SK-N-SH (cell line): ENCODE measurements at regions of chr11 and their contacts with region 1.

Region 1: DNA sequence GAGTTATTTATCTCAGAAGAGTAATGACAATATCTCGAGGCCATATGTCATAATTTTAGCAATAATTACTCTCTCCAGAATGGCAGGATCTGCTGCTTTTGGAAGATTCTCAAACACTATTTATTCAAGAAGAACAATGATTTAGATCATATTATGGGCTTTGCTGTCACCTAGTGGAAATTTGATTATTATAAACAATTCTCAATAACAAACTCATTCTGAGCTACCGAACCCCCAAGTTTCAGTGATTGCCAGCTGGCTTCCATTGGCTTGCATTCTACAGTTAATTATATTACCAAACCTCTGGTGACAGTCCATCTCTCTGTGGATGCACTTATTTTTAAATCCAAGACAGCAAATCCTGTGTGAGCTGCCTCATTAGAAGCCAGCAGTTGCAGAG is 27.9 kb upstream of the SLC36A4 start:
- DNase-seq: peak; percentile 46
- H3K4me3 ChIP-seq: no peak overlapping the region
- H3K27ac ChIP-seq: no peak overlapping the region
- H3K4me1 ChIP-seq: no peaks in the 10 kb centered on the region
- H3K27me3 ChIP-seq: no peaks in the 10 kb centered on the region
- CTCF ChIP-seq: peak; percentile 59
- EP300 ChIP-seq: no peak
- RAD21 ChIP-seq: peak; percentile 79

Region 2: GRCh38 chr11:93089474-93090102 is 136.1 kb before region 1 on chr11:
- CTCF ChIA-PET with region 1: interaction called, 14 read pairs
- POLR2A ChIA-PET with region 1: no interaction called
- DNase-seq: no peak
- H3K4me3 ChIP-seq: no peak overlapping the region
- H3K27ac ChIP-seq: no peak overlapping the region
- H3K4me1 ChIP-seq: no peaks in the 10 kb centered on the region
- H3K27me3 ChIP-seq: no peaks in the 10 kb centered on the region
- CTCF ChIP-seq: peak; percentile 54
- EP300 ChIP-seq: no peak
- RAD21 ChIP-seq: peak; percentile 48